ENCODE measurements at regions of chr2 and their contacts with region 1.

Region 1: DNA sequence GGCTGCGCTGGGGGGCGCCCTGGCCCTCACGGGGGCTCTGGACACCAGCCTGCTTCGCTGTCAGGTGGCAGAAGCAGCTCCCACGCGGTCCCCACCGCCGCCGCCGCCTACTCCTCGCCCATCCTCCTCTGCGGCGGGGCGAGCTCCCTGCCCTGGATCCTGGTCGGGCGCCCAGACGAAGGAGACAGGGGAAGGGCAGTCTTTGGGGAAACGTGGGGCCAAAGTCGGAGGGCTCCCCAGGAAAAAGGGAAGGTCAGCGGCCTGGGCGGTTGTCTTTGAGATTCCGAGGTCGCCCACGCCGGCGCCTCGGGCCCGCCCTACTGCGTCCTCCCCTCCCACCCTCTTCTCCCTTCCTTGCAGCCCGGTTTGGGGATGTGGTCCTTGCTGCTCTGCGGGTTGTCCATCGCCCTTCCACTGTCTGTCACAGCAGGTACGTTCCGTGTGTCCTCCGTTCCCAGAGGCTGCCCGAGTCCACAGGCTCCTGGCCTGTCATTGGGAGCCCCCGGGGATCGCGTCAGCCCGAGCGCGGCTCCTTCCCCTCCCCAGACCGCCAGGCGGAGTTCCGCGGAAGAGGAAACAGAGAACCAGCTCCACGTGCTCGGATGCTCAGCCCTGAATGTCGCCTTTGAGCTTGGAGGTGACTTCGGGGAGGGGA is 800 bp downstream of the IL1RL2 start:
- ATAC-seq: peak in 5 of 8 experiments; percentile 32 to 89 (median 84)
- H3K4me3 ChIP-seq: peak overlapping the region in 3 of 5 donors; percentile 5 to 12 (median 9)
- H3K27ac ChIP-seq: no peak overlapping the region
- H3K4me1 ChIP-seq: peaks cover 0 to 3% of the 10 kb centered on the region in 2 donors

Region 2: DNA sequence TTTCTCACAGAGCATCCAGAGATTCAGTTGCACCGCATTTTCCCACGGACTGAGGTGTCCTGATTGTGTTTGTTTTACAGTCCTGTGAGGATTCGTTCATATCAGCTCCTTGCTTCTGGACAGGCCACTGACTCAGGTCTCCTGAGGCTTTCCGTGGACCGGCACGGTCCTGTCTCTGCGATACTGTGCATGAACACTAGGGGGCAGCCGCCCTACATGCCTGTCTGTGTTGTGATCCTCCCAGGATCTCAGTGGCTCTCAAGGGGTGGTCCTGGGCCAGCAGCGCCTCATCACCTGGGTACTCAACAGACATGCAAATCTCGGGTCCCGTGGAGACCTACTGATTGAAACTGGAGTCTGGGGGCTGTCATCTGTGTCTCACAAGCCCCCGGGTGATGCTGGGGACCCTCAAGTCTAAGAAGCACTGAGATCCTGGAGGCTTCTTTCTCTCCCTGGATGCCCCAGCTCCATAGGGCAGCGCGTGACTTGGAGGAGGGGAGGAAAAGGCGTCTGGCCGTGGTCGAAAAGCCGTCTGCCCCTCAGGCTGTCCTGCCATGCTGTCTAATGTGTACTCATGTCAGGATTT is 166.9 kb before region 1 on chr2:
- in situ Hi-C with region 1: no loop called
- ATAC-seq: peak; percentile 96 to 100 (median 98)
- H3K4me3 ChIP-seq: no peak overlapping the region
- H3K27ac ChIP-seq: no peak overlapping the region
- H3K4me1 ChIP-seq: no peaks in the 10 kb centered on the region

Region 3: GRCh38 chr2:102235491-102235890 is 47.9 kb after region 1 on chr2:
- in situ Hi-C with region 1: loop called in 1 of 9 experiments (anchors 10 kb)
- ATAC-seq: peak in 5 of 8 experiments; percentile 13 to 84 (median 40)
- H3K4me3 ChIP-seq: no peak overlapping the region
- H3K27ac ChIP-seq: no peak overlapping the region
- H3K4me1 ChIP-seq: peaks cover 0 to under 1% of the 10 kb centered on the region in 2 donors

Region 4: DNA sequence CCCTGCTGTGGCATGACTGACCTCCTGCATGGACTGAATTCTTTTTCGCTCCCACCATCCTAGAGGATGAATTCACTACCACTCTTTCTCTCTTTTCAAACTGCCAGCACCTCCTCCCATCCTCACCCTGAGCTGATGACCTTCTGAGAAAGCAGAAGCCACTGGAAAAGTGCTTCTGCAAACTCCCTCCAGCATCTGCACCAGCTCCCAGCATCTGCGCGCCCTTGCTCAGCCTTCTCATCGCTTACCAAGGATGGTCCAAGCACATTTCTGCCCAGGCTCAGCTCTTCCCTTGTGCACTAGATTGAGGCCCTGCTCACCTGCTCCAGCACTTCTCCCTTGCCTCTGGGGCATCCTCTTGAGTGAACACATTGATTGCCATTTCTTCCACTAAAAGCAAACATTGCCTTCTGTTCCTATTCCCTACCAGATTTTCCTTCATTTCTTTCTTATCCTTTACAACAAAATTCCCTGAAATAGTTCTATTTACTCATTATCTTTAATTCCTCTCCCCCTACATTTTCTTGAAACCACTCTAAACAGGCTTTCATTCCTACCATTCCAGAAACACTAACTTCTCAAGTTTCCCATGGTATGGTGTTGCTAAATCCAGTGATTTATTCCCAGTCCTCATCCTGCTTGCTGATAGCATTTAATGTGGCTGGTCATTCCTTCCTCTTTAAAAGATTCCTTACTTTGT is 81.0 kb after region 1 on chr2:
- in situ Hi-C with region 1: no loop called
- ATAC-seq: no peak
- H3K4me3 ChIP-seq: no peak overlapping the region
- H3K27ac ChIP-seq: no peak overlapping the region
- H3K4me1 ChIP-seq: no peaks in the 10 kb centered on the region

Region 5: GRCh38 chr2:102592597-102592996 is 405.0 kb after region 1 on chr2:
- in situ Hi-C with region 1: no loop called
- ATAC-seq: peak in 2 of 8 experiments; percentile 21 to 49
- H3K4me3 ChIP-seq: no peak overlapping the region
- H3K27ac ChIP-seq: no peak overlapping the region
- H3K4me1 ChIP-seq: no peaks in the 10 kb centered on the region

Measured in motor neuron (in vitro differentiated cells).